ENCODE measurements at regions of chr13 and their contacts with region 1.

Region 1: GRCh38 chr13:27130979-27131623 is 40.5 kb downstream of the USP12 start:
- DNase-seq: peak; percentile 99
- ATAC-seq: peak; percentile 94
- H3K4me3 ChIP-seq: no peak overlapping the region
- H3K27ac ChIP-seq: peak overlapping the region; percentile 69; the same call in 1 of the 2 replicates
- H3K4me1 ChIP-seq: peaks cover 38% of the 10 kb centered on the region
- H3K27me3 ChIP-seq: no peaks in the 10 kb centered on the region
- CTCF ChIP-seq: no peak
- EP300 ChIP-seq: peak; percentile 92 to 95
- POLR2A ChIP-seq: no peak
- RAD21 ChIP-seq: no peak

Region 2: GRCh38 chr13:27113436-27113835 is 17.7 kb before region 1 on chr13:
- CTCF ChIA-PET with region 1: interaction called, 8 read pairs
- POLR2A ChIA-PET with region 1: interaction called, 5 read pairs
- RAD21 ChIA-PET with region 1: interaction called, 12 read pairs
- SMC1A ChIA-PET with region 1: interaction called, 17 read pairs
- in situ Hi-C with region 1: no loop called
- intact Hi-C with region 1: no loop called
- DNase-seq: no peak
- ATAC-seq: peak; percentile 62
- H3K4me3 ChIP-seq: peak overlapping the region; percentile 24; the same call in 1 of the 2 replicates
- H3K27ac ChIP-seq: peak overlapping the region; percentile 50; the same call in 1 of the 2 replicates
- H3K4me1 ChIP-seq: peaks cover 28% of the 10 kb centered on the region
- H3K27me3 ChIP-seq: no peaks in the 10 kb centered on the region
- CTCF ChIP-seq: no peak
- EP300 ChIP-seq: no peak
- POLR2A ChIP-seq: no peak
- RAD21 ChIP-seq: no peak

Region 3: GRCh38 chr13:27147530-27148170 is 16.5 kb after region 1 on chr13:
- CTCF ChIA-PET with region 1: interaction called, 38 read pairs
- POLR2A ChIA-PET with region 1: interaction called, 42 read pairs
- RAD21 ChIA-PET with region 1: interaction called, 28 read pairs
- SMC1A ChIA-PET with region 1: interaction called, 168 read pairs
- in situ Hi-C with region 1: no loop called
- intact Hi-C with region 1: loop called (anchors 2 kb)
- DNase-seq: peak; percentile 74
- ATAC-seq: peak; percentile 83
- H3K4me3 ChIP-seq: peak overlapping the region; percentile 48
- H3K27ac ChIP-seq: peak overlapping the region; percentile 74
- H3K4me1 ChIP-seq: peaks cover 49% of the 10 kb centered on the region
- H3K27me3 ChIP-seq: no peaks in the 10 kb centered on the region
- CTCF ChIP-seq: no peak
- EP300 ChIP-seq: peak in 1 of 2 experiments; percentile 58; a peak in 1 of 4 replicates
- POLR2A ChIP-seq: no peak
- RAD21 ChIP-seq: no peak

Region 4: DNA sequence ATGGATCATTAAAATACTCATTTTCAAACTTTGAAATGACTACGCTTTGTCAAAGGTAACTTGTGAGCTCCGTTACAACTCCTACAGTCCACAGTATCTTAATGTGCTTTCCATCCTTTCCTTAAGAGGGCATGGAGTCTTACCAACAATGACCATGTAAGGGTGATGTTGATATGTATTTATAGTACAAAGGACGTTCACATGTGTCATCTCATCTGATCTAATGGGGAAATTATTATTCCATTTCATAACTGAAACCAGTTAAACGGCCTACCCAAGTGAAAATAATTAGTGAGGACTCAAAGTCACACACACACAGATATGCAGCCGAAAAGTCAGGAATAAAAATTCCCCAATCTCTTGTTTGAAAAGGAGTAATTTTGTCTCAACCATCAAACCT is 30.9 kb after region 1 on chr13:
- CTCF ChIA-PET with region 1: interaction called, 10 read pairs
- POLR2A ChIA-PET with region 1: interaction called, 5 read pairs
- RAD21 ChIA-PET with region 1: interaction called, 56 read pairs
- SMC1A ChIA-PET with region 1: interaction called, 106 read pairs
- in situ Hi-C with region 1: no loop called
- intact Hi-C with region 1: no loop called
- DNase-seq: no peak
- ATAC-seq: peak; percentile 72
- H3K4me3 ChIP-seq: peak overlapping the region; percentile 16; the same call in 1 of the 2 replicates
- H3K27ac ChIP-seq: peak overlapping the region; percentile 5
- H3K4me1 ChIP-seq: peaks cover 10% of the 10 kb centered on the region
- H3K27me3 ChIP-seq: no peaks in the 10 kb centered on the region
- CTCF ChIP-seq: no peak
- EP300 ChIP-seq: no peak
- POLR2A ChIP-seq: no peak
- RAD21 ChIP-seq: no peak

Region 5: DNA sequence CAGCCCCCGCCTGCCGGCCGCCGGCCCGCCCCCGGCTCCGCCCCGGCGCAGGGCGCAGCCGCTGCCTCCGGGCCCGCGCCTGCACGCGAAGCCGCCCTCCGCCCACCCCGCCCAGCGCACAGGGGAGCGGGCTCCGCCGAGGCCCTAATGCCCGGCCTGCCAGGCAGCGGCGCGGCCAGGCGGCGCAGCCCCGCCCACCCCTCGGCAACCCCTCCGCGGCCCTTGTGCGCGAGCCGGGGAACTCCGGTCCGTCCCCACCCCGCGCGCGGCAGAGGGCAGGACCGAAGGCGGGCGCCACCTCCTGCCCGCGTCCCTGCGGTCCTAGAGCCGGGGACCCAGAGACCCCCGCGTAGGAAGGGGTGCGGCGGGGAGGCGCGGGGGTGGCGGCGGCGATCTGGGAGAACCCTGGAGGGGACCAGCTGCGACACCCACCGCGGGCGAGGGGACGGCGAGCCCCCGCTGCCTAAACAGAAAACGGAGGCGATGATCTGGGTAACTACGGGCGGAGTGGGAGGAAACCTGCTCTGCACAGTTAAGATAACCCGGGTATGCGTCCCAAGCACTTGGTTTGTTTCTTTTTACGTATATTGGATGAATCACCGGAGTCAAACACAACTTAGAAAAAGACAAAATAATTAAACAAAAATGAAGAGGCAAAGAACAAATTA is 40.9 kb after region 1 on chr13:
- CTCF ChIA-PET with region 1: interaction called, 5 read pairs
- POLR2A ChIA-PET with region 1: interaction called, 5 read pairs
- RAD21 ChIA-PET with region 1: interaction called, 56 read pairs
- SMC1A ChIA-PET with region 1: interaction called, 106 read pairs
- in situ Hi-C with region 1: no loop called
- intact Hi-C with region 1: loop called (anchors 1 kb)
- DNase-seq: no peak
- ATAC-seq: peak; percentile 87
- H3K4me3 ChIP-seq: peak overlapping the region; percentile 59
- H3K27ac ChIP-seq: peak overlapping the region; percentile 74
- H3K4me1 ChIP-seq: peaks cover 11% of the 10 kb centered on the region
- H3K27me3 ChIP-seq: no peaks in the 10 kb centered on the region
- CTCF ChIP-seq: peak in 2 of 3 experiments; percentile 7 to 19; a peak in 1 of 6 replicates
- EP300 ChIP-seq: peak in 1 of 2 experiments; percentile 26; a peak in 1 of 4 replicates
- POLR2A ChIP-seq: peak; percentile 7; the same call in 1 of the 2 replicates
- RAD21 ChIP-seq: peak; percentile 23; the same call in 1 of the 2 replicates

Region 6: DNA sequence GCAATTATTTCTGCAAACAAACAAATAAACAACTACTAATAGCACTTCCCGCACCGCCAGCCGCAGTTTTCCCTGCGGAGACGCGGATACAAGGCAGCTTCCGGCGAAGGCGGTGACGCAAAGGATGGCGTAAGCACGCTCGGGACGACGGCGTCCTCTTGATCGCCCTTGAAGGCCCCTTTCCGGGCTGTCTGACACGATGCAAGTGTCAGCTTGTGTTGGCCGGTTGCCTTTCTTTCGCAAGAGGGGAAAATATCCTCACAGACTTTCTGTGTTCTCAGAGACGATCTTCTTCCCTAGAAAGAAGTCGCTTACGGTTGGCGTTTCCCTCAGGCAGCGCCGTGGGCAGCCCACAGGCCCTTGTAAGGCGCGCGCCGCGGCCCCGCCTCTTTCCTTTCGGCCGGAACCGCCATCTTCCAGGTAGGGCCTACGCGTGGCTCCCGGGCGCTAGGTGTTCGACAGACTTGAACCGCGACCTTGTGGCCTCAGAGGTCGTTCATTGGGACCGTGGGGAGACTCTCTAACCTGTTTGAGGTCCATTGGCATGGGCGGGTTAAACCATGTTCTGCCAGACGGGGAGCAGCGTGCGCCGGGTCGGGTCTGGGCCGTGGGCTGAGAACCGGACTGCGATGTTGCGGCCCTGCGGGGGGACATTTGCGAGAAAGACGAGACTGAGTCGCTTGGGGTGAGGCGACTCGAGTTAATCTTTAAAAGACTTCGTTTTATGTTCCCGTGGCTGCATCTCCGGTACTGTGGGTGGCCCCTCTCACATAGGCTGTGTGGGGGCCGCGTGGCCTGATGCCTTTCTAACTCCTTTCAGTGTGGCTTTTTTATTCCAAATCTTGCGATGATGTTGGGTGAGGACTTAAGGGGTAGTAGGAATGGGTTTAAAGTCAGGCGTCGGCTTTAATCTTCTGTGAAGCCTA is 120.3 kb after region 1 on chr13 and contains the start of gene RPL21:
- CTCF ChIA-PET with region 1: interaction called, 5 read pairs
- POLR2A ChIA-PET with region 1: interaction called, 3 read pairs
- RAD21 ChIA-PET with region 1: no interaction called
- SMC1A ChIA-PET with region 1: interaction called, 4 read pairs
- in situ Hi-C with region 1: no loop called
- intact Hi-C with region 1: loop called (anchors 5 kb)
- DNase-seq: peak; percentile 86
- ATAC-seq: peak; percentile 90
- H3K4me3 ChIP-seq: peak within 1 kb of the TSS; percentile 94
- H3K27ac ChIP-seq: peak within 1 kb of the TSS; percentile 89
- H3K4me1 ChIP-seq: no peaks in the 10 kb centered on the region
- H3K27me3 ChIP-seq: no peaks in the 10 kb centered on the region
- CTCF ChIP-seq: no peak
- EP300 ChIP-seq: no peak
- POLR2A ChIP-seq: peak; percentile 99
- RAD21 ChIP-seq: no peak
- polyA plus RNA-seq, gene RPL21: 8,593 to 9,760 TPM